ENCODE measurements at regions of chr2 and their contacts with region 1.

Region 1: DNA sequence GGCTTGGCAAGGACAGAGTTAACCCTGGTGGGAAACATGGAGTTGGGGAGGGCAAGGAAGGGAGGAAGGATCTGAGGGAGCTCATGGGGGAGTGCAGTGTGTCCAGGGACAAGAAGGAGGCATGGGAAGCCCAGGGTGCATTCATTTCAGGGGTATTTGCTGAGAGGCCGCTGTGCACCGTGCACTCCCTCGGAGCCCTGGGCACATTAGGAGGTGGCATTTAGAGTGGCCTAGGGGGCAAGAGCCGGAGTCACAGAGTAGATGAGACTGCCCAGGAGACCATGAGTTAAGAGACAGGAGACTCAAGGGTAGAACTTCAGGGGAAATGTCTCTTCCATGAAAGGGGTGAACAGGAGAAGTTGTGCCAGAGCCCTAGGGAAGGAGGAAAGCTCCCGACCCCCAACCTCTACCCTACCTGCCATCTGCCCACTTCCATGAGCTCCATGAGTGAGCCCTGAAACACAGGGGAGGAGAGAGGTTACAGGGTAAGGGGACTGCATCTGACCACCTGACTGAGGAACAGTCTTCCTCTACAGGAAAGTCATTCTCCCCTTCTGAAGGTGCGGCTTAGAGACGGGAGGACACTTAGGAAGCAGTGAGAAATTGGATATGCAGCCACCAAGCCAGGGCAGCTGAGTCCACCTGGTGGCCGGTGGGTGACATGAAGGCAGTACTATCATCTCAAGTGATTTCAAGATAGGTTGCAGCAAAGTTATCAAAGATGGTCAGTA is 58.5 kb upstream of the COPS8 start:
- DNase-seq: peak; percentile 57 to 75
- H3K4me3 ChIP-seq: no peak overlapping the region
- H3K27ac ChIP-seq: no peak overlapping the region
- H3K4me1 ChIP-seq: peaks cover 23% of the 10 kb centered on the region
- H3K27me3 ChIP-seq: peaks cover 21% of the 10 kb centered on the region
- CTCF ChIP-seq: peak; percentile 96

Region 2: DNA sequence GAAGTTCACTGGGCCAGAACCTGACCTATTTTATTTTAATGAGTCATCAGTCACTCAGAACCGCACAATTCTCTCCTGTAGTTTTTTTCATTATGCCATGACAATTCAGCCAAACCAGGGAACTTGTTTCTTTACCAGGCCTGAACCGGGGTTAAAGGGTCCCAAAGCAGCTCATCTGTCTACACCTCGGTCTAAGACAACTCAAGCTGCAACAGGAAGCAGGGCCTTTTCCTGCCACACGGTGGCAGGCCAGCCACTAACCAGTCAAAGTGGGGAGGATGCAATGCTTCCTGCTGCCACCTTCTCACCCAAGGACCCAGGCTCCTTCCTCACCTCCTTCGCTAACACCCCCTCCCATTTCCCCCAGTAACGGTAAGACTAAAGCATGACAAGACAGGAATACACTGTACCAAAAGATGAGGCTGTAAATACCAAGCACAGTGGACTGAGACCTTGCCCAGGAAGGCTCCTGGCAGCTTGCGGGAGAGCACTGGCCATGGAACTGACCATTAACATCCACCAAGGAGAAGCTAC is 514.2 kb before region 1 on chr2:
- CTCF ChIA-PET with region 1: interaction called, 3 read pairs
- POLR2A ChIA-PET with region 1: no interaction called
- intact Hi-C with region 1: loop called (anchors 1 kb)
- DNase-seq: peak; percentile 30 to 33
- H3K4me3 ChIP-seq: no peak overlapping the region
- H3K27ac ChIP-seq: no peak overlapping the region
- H3K4me1 ChIP-seq: no peaks in the 10 kb centered on the region
- H3K27me3 ChIP-seq: peaks cover 33% of the 10 kb centered on the region
- CTCF ChIP-seq: peak; percentile 72

Region 3: GRCh38 chr2:236663287-236664101 is 363.7 kb before region 1 on chr2:
- CTCF ChIA-PET with region 1: no interaction called
- POLR2A ChIA-PET with region 1: no interaction called
- intact Hi-C with region 1: loop called (anchors 5 kb)
- DNase-seq: peak in 1 of 2 experiments; percentile 25
- H3K4me3 ChIP-seq: no peak overlapping the region
- H3K27ac ChIP-seq: no peak overlapping the region
- H3K4me1 ChIP-seq: peaks cover 29% of the 10 kb centered on the region
- H3K27me3 ChIP-seq: peaks cover 8% of the 10 kb centered on the region
- CTCF ChIP-seq: no peak

Region 4: GRCh38 chr2:236745420-236746197 is 281.5 kb before region 1 on chr2:
- CTCF ChIA-PET with region 1: no interaction called
- POLR2A ChIA-PET with region 1: interaction called, 5 read pairs
- intact Hi-C with region 1: loop called (anchors 2 kb)
- DNase-seq: peak; percentile 78 to 92
- H3K4me3 ChIP-seq: peak overlapping the region; percentile 8; the same call in 1 of the 2 replicates
- H3K27ac ChIP-seq: peak overlapping the region; percentile 99
- H3K4me1 ChIP-seq: peaks cover 58% of the 10 kb centered on the region
- H3K27me3 ChIP-seq: no peaks in the 10 kb centered on the region
- CTCF ChIP-seq: no peak

Region 5: GRCh38 chr2:236824877-236825692 is 202.1 kb before region 1 on chr2:
- CTCF ChIA-PET with region 1: no interaction called
- POLR2A ChIA-PET with region 1: no interaction called
- intact Hi-C with region 1: loop called (anchors 1 kb)
- DNase-seq: peak; percentile 43 to 94
- H3K4me3 ChIP-seq: no peak overlapping the region
- H3K27ac ChIP-seq: peak overlapping the region; percentile 29; the same call in 1 of the 2 replicates
- H3K4me1 ChIP-seq: peaks cover 34% of the 10 kb centered on the region
- H3K27me3 ChIP-seq: peaks cover 24% of the 10 kb centered on the region
- CTCF ChIP-seq: no peak

Region 6: GRCh38 chr2:237149425-237149824 is 122.3 kb after region 1 on chr2:
- CTCF ChIA-PET with region 1: no interaction called
- POLR2A ChIA-PET with region 1: no interaction called
- intact Hi-C with region 1: no loop called
- DNase-seq: no peak
- H3K4me3 ChIP-seq: no peak overlapping the region
- H3K27ac ChIP-seq: no peak overlapping the region
- H3K4me1 ChIP-seq: no peaks in the 10 kb centered on the region
- H3K27me3 ChIP-seq: no peaks in the 10 kb centered on the region
- CTCF ChIP-seq: no peak